Activated B cell treated with CpG ODN at 0.5 μM for 24 hours (primary cell): ENCODE measurements at regions of chr1 and their contacts with region 1.

Region 1: GRCh38 chr1:59266180-59266926 is 30.5 kb upstream of the FGGY start:
- DNase-seq: peak; percentile 21
- ATAC-seq: peak; percentile 92
- H3K4me3 Mint-ChIP-seq: peak overlapping the region; percentile 75
- H3K27ac Mint-ChIP-seq: peak overlapping the region; percentile 97
- H3K4me1 Mint-ChIP-seq: peaks cover 63% of the 10 kb centered on the region
- H3K27me3 Mint-ChIP-seq: no peaks in the 10 kb centered on the region
- CTCF ChIP-seq: no peak

Region 2: GRCh38 chr1:59007820-59008598 is 258.3 kb before region 1 on chr1:
- CTCF ChIA-PET with region 1: no interaction called
- POLR2A ChIA-PET with region 1: interaction called, 3 read pairs
- intact Hi-C with region 1: loop called (anchors 2 kb)
- DNase-seq: no peak
- ATAC-seq: peak; percentile 76
- H3K4me3 Mint-ChIP-seq: peak overlapping the region; percentile 62
- H3K27ac Mint-ChIP-seq: peak overlapping the region; percentile 90
- H3K4me1 Mint-ChIP-seq: peaks cover 82% of the 10 kb centered on the region
- H3K27me3 Mint-ChIP-seq: no peaks in the 10 kb centered on the region
- CTCF ChIP-seq: no peak

Region 3: GRCh38 chr1:59146651-59147358 is 119.5 kb before region 1 on chr1:
- CTCF ChIA-PET with region 1: no interaction called
- POLR2A ChIA-PET with region 1: no interaction called
- intact Hi-C with region 1: loop called (anchors 1 kb)
- DNase-seq: peak; percentile 64
- ATAC-seq: peak; percentile 84
- H3K4me3 Mint-ChIP-seq: peak overlapping the region; percentile 85
- H3K27ac Mint-ChIP-seq: peak overlapping the region; percentile 82
- H3K4me1 Mint-ChIP-seq: peaks cover 46% of the 10 kb centered on the region
- H3K27me3 Mint-ChIP-seq: no peaks in the 10 kb centered on the region
- CTCF ChIP-seq: no peak

Region 4: GRCh38 chr1:59188413-59189213 is 77.7 kb before region 1 on chr1:
- CTCF ChIA-PET with region 1: no interaction called
- POLR2A ChIA-PET with region 1: no interaction called
- intact Hi-C with region 1: no loop called
- DNase-seq: no peak
- ATAC-seq: no peak
- H3K4me3 Mint-ChIP-seq: no peak overlapping the region
- H3K27ac Mint-ChIP-seq: no peak overlapping the region
- H3K4me1 Mint-ChIP-seq: peaks cover 5% of the 10 kb centered on the region
- H3K27me3 Mint-ChIP-seq: no peaks in the 10 kb centered on the region
- CTCF ChIP-seq: no peak